Aorta (tissue), 5 donors: ENCODE measurements at regions of chr2 and their contacts with region 1.

Region 1: DNA sequence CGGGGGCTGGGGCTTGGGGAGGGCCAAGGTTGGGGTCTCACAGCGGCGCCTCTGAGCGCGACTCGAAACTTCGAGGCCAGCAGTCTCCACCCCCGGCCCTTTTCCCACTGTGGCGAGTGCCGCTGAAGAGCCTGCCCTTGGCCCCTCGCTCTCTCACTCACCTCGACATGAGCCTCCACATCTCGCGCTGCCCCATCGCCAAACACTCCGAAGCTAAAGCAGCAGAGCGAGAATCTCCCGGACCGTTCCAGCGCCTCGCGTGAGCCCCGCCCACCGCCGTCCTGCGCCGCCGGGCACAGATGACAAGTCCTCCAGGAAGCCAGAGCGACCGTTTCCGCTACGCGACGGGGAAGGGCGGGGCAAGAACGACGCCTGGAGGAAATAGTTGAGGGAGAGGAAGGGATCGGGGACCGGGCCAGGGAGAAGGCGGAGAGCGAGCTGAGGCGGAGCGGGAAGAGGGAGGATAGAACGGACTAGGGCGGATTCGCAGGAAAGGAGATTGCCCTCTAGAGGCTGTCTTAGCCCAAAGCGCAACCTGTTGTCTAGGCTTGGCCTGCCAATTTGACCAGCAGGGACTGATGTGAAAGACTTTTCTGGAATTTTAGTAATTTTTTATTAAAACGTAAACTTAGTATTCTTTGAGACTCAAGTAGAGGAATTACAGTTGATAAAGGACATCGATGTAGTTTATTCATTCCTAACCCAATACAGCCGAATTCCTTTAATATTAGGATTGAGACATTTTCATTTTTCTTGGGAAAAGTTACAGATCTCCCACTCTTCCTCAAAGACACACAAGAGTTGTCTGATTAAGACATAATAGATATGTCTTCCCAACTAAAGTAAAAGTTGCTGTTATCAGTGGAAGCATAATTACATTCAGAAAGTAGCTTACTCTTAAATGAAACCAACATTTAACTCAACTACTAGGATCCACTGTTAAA is at the start of gene HIBCH:
- DNase-seq: peak; percentile 99 to 100
- ATAC-seq: peak; percentile 98
- H3K4me3 ChIP-seq: peak within 1 kb of the TSS; percentile 67 to 87
- H3K27ac ChIP-seq: peak within 1 kb of the TSS; percentile 83 to 93
- H3K4me1 ChIP-seq: peaks cover 0 to 4% of the 10 kb centered on the region in 2 donors
- H3K27me3 ChIP-seq: no peaks in the 10 kb centered on the region
- total RNA-seq, gene HIBCH: 50.1 to 51.5 TPM

Region 2: DNA sequence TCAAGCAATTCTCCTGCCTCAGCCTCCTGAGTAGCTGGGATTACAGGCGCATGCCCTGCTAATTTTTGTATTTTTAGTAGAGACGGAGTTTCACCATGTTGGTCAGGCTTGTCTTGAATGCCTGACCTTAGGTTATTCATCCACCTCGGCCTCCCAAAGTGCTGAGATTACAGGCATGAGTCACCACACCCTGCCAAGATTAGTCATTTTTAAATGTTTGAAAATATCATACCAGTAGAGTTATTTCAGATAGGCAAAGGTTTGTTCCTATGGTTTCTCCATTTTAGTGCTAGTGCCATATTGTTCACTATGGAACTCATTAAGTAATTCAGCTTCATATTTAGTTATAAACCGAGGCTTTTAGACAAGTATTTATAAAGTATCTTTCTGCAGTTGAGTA is 52.5 kb before region 1 on chr2:
- intact Hi-C with region 1: loop called in 1 of 2 experiments (anchors 5 kb)
- DNase-seq: no peak
- ATAC-seq: no peak
- H3K4me3 ChIP-seq: no peak overlapping the region
- H3K27ac ChIP-seq: no peak overlapping the region
- H3K4me1 ChIP-seq: peaks cover 4% of the 10 kb centered on the region in 2 donors
- H3K27me3 ChIP-seq: no peaks in the 10 kb centered on the region

Region 3: GRCh38 chr2:190283783-190284182 is 36.0 kb before region 1 on chr2:
- intact Hi-C with region 1: loop called in 1 of 2 experiments (anchors 5 kb)
- DNase-seq: no peak
- ATAC-seq: peak; percentile 67
- H3K4me3 ChIP-seq: no peak overlapping the region
- H3K27ac ChIP-seq: no peak overlapping the region
- H3K4me1 ChIP-seq: peaks cover 0 to 4% of the 10 kb centered on the region in 2 donors
- H3K27me3 ChIP-seq: no peaks in the 10 kb centered on the region